Naive thymus-derived CD8-positive, alpha-beta T cell (primary cell): ENCODE measurements at regions of chr19 and their contacts with region 1.

Region 1: DNA sequence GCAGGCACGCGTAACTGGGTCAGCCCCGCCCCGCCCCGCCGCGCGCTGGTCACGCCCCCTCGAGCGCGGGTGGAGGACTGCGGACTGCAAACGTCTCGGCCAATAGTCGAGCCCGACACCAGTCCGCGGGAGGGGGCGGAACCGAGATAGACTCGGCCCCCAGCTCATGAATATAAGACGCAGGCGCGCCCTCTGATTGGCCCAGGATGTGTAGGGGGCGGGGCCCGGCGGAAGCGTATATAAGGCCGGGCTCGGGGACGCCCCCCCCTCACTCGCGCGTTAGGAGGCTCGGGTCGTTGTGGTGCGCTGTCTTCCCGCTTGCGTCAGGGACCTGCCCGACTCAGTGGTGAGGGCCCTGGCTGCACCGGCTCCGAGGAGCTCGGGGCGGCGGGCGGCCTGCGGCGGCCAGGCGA is at the start of gene CIRBP:
- DNase-seq: peak; percentile 97 to 100 (median 99)
- ATAC-seq: peak; percentile 76 to 84
- H3K4me3 Mint-ChIP-seq: peak within 1 kb of the TSS; percentile 82 to 93 (median 89)
- H3K27ac Mint-ChIP-seq: peak within 1 kb of the TSS; percentile 83 to 97 (median 94)
- H3K4me1 Mint-ChIP-seq: peaks cover 40 to 82% (median 77%) of the 10 kb centered on the region in 4 donors
- H3K27me3 Mint-ChIP-seq: no peaks in the 10 kb centered on the region
- polyA plus RNA-seq, gene CIRBP: 204 to 273 (median 262) TPM

Region 2: GRCh38 chr19:907183-907853 is 361.8 kb before region 1 on chr19:
- POLR2A ChIA-PET with region 1: interaction called, 17 read pairs
- DNase-seq: peak in 3 of 10 donors; percentile 45 to 49 (median 47)
- ATAC-seq: peak in 1 of 2 donors; percentile 4
- H3K4me3 Mint-ChIP-seq: peak overlapping the region; percentile 48 to 91 (median 86)
- H3K27ac Mint-ChIP-seq: peak overlapping the region; percentile 99 to 100 (median 100)
- H3K4me1 Mint-ChIP-seq: peaks cover 14 to 72% (median 62%) of the 10 kb centered on the region in 4 donors
- H3K27me3 Mint-ChIP-seq: no peaks in the 10 kb centered on the region

Region 3: GRCh38 chr19:1064661-1065605 is 204.1 kb before region 1 on chr19:
- POLR2A ChIA-PET with region 1: interaction called, 28 read pairs
- DNase-seq: peak in 9 of 10 donors; percentile 59 to 78 (median 68)
- ATAC-seq: peak; percentile 21 to 30
- H3K4me3 Mint-ChIP-seq: peak overlapping the region; percentile 40 to 92 (median 74)
- H3K27ac Mint-ChIP-seq: peak overlapping the region in 9 of 10 donors; percentile 76 to 94 (median 91)
- H3K4me1 Mint-ChIP-seq: peaks cover 16 to 46% (median 34%) of the 10 kb centered on the region in 4 donors
- H3K27me3 Mint-ChIP-seq: no peaks in the 10 kb centered on the region

Region 4: DNA sequence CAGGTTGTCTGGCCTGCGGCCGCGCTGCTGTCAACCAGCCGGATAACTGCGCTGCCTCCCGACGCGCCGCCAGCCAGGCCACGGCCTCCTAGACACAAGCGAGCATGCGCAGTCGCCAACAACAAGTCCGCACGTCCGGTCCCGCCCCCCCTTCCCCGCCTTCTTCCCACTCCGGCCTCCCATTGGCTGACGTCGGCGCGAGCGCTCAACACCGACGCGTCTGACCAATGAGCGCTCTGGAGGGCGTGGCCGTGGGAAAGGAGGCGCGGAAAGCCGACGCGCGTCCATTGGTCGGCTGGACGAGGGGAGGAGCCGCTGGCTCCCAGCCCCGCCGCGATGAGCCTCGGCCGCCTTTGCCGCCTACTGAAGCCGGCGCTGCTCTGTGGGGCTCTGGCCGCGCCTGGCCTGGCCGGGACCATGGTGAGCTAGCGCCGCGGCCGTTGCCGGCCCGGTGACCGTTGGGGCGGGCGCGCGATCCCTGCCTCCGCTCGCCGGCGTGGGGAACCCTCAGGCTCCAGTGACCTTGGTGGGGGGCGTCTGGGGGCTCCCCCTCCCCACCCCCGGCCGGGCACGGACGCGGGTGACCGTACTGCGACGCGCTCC is 165.3 kb before region 1 on chr19 and contains the start of gene GPX4:
- POLR2A ChIA-PET with region 1: interaction called, 21 read pairs
- DNase-seq: peak; percentile 90 to 99 (median 98)
- ATAC-seq: peak; percentile 85 to 89
- H3K4me3 Mint-ChIP-seq: peak within 1 kb of the TSS; percentile 66 to 87 (median 76)
- H3K27ac Mint-ChIP-seq: peak within 1 kb of the TSS; percentile 37 to 97 (median 94)
- H3K4me1 Mint-ChIP-seq: peaks cover 12 to 47% (median 32%) of the 10 kb centered on the region in 4 donors
- H3K27me3 Mint-ChIP-seq: no peaks in the 10 kb centered on the region
- polyA plus RNA-seq, gene GPX4: 370 to 465 (median 405) TPM

Region 5: DNA sequence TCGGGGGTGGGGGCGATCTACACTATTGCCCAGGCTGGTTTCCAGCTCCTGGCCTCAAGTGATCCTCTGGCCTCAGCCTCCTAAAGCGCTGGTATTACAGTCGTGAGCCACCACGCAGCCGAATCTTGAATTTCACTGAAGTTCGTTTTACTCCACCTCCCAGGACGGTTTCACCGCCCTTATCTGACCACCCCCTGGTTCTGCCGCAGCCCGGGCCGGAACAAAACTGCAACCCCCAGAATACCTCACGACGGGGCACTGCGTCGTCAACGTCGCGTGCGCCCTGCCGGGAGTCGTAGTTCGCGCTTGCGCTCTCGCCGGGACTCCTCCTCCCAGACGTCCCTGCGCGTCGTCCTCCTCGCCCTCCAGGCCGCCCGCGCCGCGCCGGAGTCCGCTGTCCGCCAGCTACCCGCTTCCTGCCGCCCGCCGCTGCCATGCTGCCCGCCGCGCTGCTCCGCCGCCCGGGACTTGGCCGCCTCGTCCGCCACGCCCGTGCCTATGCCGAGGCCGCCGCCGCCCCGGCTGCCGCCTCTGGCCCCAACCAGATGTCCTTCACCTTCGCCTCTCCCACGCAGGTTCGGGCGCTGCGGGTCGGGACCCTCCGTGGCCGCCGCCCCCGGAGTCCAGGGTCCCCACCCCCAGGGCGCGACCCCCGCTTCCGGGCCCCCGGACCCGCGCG is 27.5 kb before region 1 on chr19 and contains the start of gene ATP5F1D:
- POLR2A ChIA-PET with region 1: interaction called, 594 read pairs
- DNase-seq: peak; percentile 79 to 93 (median 86)
- ATAC-seq: peak; percentile 64 to 66
- H3K4me3 Mint-ChIP-seq: peak within 1 kb of the TSS; percentile 79 to 96 (median 88)
- H3K27ac Mint-ChIP-seq: peak within 1 kb of the TSS; percentile 86 to 98 (median 94)
- H3K4me1 Mint-ChIP-seq: peaks cover 13 to 48% (median 44%) of the 10 kb centered on the region in 4 donors
- H3K27me3 Mint-ChIP-seq: peaks cover 2 to 9% (median 7%) of the 10 kb centered on the region in 5 donors
- polyA plus RNA-seq, gene ATP5F1D: 214 to 264 (median 262) TPM

Region 6: DNA sequence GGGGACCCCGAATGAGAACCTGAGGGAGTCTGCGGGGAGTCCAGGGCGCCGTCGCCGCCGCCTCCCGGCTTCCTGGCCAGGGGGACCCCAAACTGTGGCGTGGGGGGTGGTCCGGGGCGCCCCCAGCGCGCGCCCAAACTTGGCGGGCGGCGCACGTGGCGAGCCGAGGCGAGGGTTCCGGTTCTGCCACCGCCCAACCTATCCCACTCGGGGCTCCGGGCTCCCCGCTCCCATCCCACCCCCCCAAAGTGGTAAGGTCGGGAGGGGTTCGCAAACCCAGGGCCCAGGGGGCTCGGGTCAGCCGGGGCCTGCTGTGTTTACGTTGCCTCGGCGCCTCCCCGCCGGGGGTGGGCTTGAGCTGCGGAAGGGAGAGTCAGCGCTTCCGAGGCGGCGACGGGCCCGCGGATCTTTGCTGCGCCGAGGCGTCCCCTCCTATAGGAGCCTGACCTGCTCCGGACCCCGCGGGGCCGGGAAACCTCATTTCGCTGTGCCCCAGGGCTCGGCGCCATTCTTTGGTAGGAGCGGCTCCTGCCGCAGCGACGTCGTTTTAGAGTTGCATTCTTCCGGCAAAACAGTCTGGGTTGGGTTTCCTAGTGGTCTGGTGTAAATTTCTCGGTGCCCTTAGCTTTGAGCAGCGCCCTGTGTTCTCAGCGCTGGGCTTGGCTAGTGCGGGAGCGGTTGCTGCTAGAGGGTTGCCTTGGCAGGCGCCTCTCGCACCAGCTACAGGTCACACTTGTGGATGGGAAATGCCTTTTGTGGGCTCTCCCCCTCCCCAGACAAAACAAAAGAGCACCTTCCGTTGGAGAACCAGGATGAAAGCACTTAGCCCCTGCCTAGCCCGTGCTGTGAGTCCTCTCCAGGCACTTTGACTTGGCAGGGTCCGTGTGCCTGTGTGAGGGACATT is 139.5 kb after region 1 on chr19:
- POLR2A ChIA-PET with region 1: interaction called, 16 read pairs
- DNase-seq: peak; percentile 39 to 77 (median 59)
- ATAC-seq: peak; percentile 29 to 43
- H3K4me3 Mint-ChIP-seq: peak overlapping the region; percentile 89 to 97 (median 93)
- H3K27ac Mint-ChIP-seq: peak overlapping the region; percentile 91 to 98 (median 95)
- H3K4me1 Mint-ChIP-seq: peaks cover 30 to 59% (median 52%) of the 10 kb centered on the region in 4 donors
- H3K27me3 Mint-ChIP-seq: peaks cover 0 to 1% (median 0%) of the 10 kb centered on the region in 5 donors